Activated CD4-positive, alpha-beta memory T cell treated with anti-CD3 and anti-CD28 coated beads for 36 hours (primary cell): ENCODE measurements at regions of chr4 and their contacts with region 1.

Region 1: DNA sequence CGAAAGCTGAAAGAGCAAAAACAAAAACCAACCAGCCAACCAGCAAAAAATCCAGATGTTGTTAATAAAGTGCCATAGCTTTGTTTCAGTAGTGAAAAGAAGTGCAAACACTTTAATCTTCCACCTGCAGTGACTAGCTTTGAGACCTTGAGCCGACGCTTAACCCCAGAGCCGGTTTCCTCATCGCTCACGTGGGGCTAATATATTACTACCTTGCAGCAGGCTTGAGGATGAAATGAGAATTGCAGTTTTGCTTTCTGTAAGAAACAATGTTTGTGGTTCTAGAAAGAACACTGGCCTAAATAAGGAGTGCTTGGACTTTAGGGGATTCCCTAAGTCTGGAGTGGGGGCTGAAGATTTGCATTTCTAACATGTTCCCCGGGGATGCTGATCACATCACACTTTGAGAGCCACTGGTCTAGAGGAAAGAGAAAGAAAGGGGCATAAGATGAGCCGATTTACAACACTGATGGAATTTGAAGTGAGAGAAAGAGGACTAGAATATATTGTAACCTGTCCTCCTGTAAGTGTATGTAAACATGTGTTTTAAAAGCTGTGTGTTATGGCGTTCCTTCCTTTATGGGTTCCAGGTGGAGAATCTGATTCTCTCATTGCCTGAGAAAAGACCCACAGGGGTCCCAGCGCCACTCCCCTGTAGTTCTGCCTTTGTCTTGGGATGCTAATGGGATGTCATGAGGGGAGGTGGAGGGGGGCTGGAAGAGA is 1.4 kb downstream of the FGF2 start:
- DNase-seq: peak; percentile 68
- H3K4me3 Mint-ChIP-seq: peak overlapping the region; percentile 74
- H3K27ac Mint-ChIP-seq: peak overlapping the region; percentile 3
- H3K4me1 Mint-ChIP-seq: peaks cover 13% of the 10 kb centered on the region
- H3K27me3 Mint-ChIP-seq: peaks cover 63% of the 10 kb centered on the region

Region 2: DNA sequence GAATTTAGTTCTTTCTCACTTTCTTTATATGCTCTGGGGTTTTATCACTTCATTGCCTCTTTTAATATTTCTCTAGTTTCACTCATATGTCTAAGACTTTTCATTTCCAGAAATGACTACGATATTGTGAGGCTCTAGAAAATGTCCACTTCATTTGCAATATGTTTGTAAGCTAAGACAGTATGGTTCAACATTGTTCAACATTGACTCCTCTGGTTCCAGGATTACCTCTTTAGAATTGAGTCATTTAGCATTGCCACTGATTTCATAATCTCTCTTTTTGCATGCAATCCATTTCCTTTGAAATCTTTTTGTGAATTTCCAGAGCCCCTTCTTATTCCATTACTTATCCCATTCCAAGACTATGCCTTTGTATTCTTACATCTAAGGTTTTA is 63.2 kb before region 1 on chr4:
- CTCF ChIA-PET with region 1: no interaction called
- POLR2A ChIA-PET with region 1: no interaction called
- intact Hi-C with region 1: loop called (anchors 2 kb)
- DNase-seq: no peak
- H3K4me3 Mint-ChIP-seq: no peak overlapping the region
- H3K27ac Mint-ChIP-seq: peak overlapping the region; percentile 3
- H3K4me1 Mint-ChIP-seq: peaks cover 18% of the 10 kb centered on the region
- H3K27me3 Mint-ChIP-seq: no peaks in the 10 kb centered on the region

Region 3: GRCh38 chr4:122857160-122857559 is 29.1 kb after region 1 on chr4:
- CTCF ChIA-PET with region 1: no interaction called
- POLR2A ChIA-PET with region 1: no interaction called
- intact Hi-C with region 1: no loop called
- DNase-seq: no peak
- H3K4me3 Mint-ChIP-seq: no peak overlapping the region
- H3K27ac Mint-ChIP-seq: no peak overlapping the region
- H3K4me1 Mint-ChIP-seq: no peaks in the 10 kb centered on the region
- H3K27me3 Mint-ChIP-seq: peaks cover 4% of the 10 kb centered on the region

Region 4: DNA sequence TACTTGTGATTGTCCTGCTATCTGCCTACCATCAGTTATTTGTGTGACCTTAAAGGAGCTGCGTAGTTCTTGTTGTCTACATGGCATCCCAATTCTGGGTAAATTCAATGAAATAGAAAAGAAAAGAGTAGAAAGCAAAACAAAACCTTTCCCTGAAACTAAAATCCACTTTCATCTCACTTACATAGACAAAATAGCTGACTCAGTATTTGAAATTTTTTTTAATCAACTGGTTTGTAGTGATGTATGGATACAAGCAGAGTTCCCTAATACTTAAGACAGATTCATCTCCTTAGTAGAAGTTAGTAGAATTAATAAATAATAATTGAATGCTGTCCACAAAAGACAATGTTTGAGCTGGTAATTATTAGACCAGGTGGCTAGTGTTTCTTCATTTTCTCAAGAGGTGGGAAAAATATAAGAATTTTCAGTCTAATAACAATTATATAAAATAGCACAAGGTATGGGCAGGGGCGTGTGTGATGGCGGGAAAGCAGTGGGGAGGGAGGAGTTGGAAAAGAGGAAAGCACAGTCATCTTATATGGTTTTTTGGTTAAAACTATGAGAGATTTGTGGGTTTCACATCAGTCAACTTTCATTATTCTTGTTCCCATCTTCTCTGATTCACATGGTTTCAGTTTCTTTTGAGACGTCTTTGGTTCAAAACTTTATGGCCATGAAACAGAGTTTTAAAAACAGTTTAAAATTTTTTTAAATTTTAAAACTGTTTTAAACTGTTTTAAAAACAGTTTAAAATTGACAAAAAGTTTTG is 843.8 kb after region 1 on chr4:
- CTCF ChIA-PET with region 1: no interaction called
- POLR2A ChIA-PET with region 1: no interaction called
- intact Hi-C with region 1: loop called (anchors 5 kb)
- DNase-seq: peak; percentile 55
- H3K4me3 Mint-ChIP-seq: no peak overlapping the region
- H3K27ac Mint-ChIP-seq: no peak overlapping the region
- H3K4me1 Mint-ChIP-seq: peaks cover 21% of the 10 kb centered on the region
- H3K27me3 Mint-ChIP-seq: peaks cover 42% of the 10 kb centered on the region